ENCODE measurements at regions of chr3 and their contacts with region 1.

Region 1: GRCh38 chr3:2156244-2156847 is 57.7 kb downstream of the CNTN4 start:
- DNase-seq: peak; percentile 15
- CTCF ChIP-seq: peak; percentile 67

Region 2: GRCh38 chr3:2166552-2166951 is 10.2 kb after region 1 on chr3:
- CTCF ChIA-PET with region 1: interaction called, 16 read pairs
- POLR2A ChIA-PET with region 1: no interaction called
- DNase-seq: no peak
- CTCF ChIP-seq: peak; percentile 4